ENCODE measurements at regions of chr14 and their contacts with region 1.

Region 1: GRCh38 chr14:32252030-32252670 is 49.1 kb upstream of the RNU6-8 start:
- DNase-seq: peak; percentile 68
- H3K4me3 ChIP-seq: no peak overlapping the region
- H3K27ac ChIP-seq: peak overlapping the region; percentile 28 to 65 (median 60)
- H3K4me1 ChIP-seq: peaks cover 16 to 42% (median 40%) of the 10 kb centered on the region in 4 donors
- H3K27me3 ChIP-seq: no peaks in the 10 kb centered on the region
- CTCF ChIP-seq: peak; percentile 80 to 85 (median 85)
- EP300 ChIP-seq: no peak
- POLR2A ChIP-seq: no peak

Region 2: GRCh38 chr14:31510222-31510621 is 741.9 kb before region 1 on chr14:
- intact Hi-C with region 1: loop called (anchors 2 kb)
- DNase-seq: no peak
- H3K4me3 ChIP-seq: no peak overlapping the region
- H3K27ac ChIP-seq: no peak overlapping the region
- H3K4me1 ChIP-seq: peaks cover 11 to 20% (median 13%) of the 10 kb centered on the region in 4 donors
- H3K27me3 ChIP-seq: no peaks in the 10 kb centered on the region
- CTCF ChIP-seq: peak; percentile 54 to 63 (median 54)
- EP300 ChIP-seq: no peak
- POLR2A ChIP-seq: no peak

Region 3: DNA sequence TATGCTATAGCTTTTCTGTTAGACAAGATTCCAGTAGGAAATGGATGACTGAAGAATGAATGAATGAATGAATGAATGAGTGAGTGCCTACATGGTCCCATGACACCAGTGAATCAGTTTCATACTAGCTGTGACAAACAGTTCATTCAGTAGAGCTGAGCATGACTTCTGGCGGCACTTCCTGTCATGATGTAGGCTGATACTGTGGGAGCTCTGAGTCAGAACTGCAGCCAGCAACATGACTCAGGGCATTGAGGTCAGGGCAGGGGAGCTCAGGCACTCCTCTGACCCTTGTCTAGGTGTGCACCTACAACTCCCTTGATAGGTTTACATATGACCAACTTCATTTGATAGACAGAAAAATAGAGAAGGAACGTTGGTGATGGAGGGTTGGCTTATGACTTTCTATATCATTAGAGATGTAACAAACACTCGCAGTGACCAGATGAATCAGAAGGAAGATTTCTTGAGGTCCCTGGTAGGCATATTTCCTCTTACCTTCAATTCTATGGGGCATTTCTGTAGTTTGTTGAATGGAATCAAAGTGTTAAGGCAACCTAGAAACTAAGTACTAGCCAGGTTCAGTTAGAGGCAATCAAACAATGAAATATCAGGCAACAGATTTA is 314.3 kb before region 1 on chr14:
- intact Hi-C with region 1: loop called (anchors 5 kb)
- DNase-seq: no peak
- H3K4me3 ChIP-seq: no peak overlapping the region
- H3K27ac ChIP-seq: no peak overlapping the region
- H3K4me1 ChIP-seq: peaks cover 0 to 9% (median 7%) of the 10 kb centered on the region in 4 donors
- H3K27me3 ChIP-seq: no peaks in the 10 kb centered on the region
- CTCF ChIP-seq: no peak
- EP300 ChIP-seq: no peak
- POLR2A ChIP-seq: no peak

Region 4: GRCh38 chr14:32202998-32203882 is 48.9 kb before region 1 on chr14 and contains the start of gene RNU6-8:
- intact Hi-C with region 1: loop called (anchors 5 kb)
- DNase-seq: peak; percentile 95
- H3K4me3 ChIP-seq: peak within 1 kb of the TSS; percentile 57 to 80 (median 69)
- H3K27ac ChIP-seq: peak within 1 kb of the TSS; percentile 82 to 89 (median 85)
- H3K4me1 ChIP-seq: peaks cover 9 to 23% (median 19%) of the 10 kb centered on the region in 4 donors
- H3K27me3 ChIP-seq: no peaks in the 10 kb centered on the region
- CTCF ChIP-seq: no peak
- EP300 ChIP-seq: no peak
- POLR2A ChIP-seq: peak; percentile 50
- total RNA-seq, gene RNU6-8: not detected

Region 5: DNA sequence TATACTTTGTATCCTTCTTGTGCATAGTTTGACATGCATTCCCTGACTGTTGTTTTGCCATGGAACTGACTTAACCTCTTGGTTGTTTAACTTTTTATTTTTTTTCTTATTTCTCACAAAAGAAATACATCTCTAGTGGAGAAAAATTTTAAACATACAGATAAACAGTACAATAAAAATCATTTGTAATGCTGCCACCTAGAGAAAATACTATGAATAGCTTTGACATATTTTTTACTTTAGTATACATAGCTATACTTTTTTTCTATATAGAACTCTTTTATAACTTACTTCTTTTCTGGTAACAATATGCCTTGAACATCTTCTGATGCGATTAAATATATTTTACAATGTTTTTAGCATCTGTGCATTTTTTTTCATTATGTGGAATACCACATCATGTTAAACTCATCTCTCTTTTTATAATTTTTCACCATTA is 261.4 kb after region 1 on chr14:
- intact Hi-C with region 1: loop called (anchors 2 kb)
- DNase-seq: no peak
- H3K4me3 ChIP-seq: no peak overlapping the region
- H3K27ac ChIP-seq: peak overlapping the region in 3 of 4 donors; percentile 19 to 43 (median 34)
- H3K4me1 ChIP-seq: peaks cover 17 to 55% (median 51%) of the 10 kb centered on the region in 4 donors
- H3K27me3 ChIP-seq: no peaks in the 10 kb centered on the region
- CTCF ChIP-seq: peak; percentile 29 to 68 (median 64)
- EP300 ChIP-seq: no peak
- POLR2A ChIP-seq: no peak

Region 6: GRCh38 chr14:32728971-32729370 is 476.8 kb after region 1 on chr14:
- intact Hi-C with region 1: no loop called
- DNase-seq: no peak
- H3K4me3 ChIP-seq: no peak overlapping the region
- H3K27ac ChIP-seq: no peak overlapping the region
- H3K4me1 ChIP-seq: peaks cover 11 to 18% (median 17%) of the 10 kb centered on the region in 4 donors
- H3K27me3 ChIP-seq: no peaks in the 10 kb centered on the region
- CTCF ChIP-seq: no peak
- EP300 ChIP-seq: no peak
- POLR2A ChIP-seq: no peak

Measured in esophagus muscularis mucosa (tissue), 4 donors.